HepG2 (cell line): ENCODE measurements at regions of chr12 and their contacts with region 1.

Region 1: DNA sequence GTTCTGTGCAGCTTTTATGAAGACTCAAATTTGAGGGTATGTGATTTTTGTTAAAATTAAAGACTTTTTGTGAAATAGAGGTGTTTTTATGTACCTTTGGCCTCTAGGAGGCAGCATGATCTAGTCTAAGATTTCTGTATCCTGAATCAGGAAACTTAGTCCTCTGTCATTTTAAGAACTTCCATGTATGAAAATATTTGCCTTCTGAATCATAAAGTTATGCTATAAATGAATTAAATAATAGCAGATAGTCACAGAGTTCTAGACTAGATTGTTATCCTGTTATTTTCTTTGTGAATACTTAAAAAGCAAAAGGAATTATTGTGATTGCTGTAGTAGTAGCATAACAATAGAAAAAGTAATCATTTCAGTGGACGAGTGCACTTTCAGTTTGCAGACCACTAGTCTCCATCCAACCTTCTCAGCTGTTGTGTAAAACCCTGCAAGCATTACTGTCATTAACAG is 56.3 kb downstream of the FGD4 start:
- DNase-seq: peak; percentile 55
- ATAC-seq: no peak
- H3K4me3 ChIP-seq: no peak overlapping the region
- H3K27ac ChIP-seq: no peak overlapping the region
- H3K4me1 ChIP-seq: peaks cover 11% of the 10 kb centered on the region
- H3K27me3 ChIP-seq: no peaks in the 10 kb centered on the region
- CTCF ChIP-seq: peak; percentile 73
- EP300 ChIP-seq: no peak
- POLR2A ChIP-seq: no peak
- RAD21 ChIP-seq: peak; percentile 59; the same call in 1 of the 2 replicates

Region 2: DNA sequence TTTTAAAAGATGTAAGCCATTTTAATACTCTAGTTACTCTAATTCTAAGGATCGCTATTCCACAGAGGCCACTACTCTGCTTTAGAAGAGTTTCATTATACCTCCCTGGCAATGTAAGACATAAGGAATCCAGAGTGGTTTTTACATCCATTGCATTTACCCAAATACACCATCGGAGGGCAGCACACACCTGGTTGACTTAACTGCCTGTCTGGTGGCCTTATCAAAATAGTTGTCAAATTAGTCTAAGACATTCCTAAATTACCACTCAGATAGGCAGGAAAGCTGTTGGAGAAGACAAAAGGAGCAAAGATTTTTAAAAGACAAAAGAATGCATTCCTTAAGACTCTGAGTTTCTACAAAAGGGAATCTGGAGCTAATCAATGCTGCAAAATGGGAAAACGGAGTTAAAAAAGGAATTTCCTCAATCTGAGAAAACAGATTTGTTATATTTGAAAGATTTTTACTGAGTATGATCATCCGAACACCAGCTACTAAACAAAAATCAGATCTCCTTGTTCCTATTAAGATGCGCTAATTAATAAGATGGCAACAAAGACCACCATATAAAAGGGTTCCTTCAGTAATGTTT is 90.1 kb before region 1 on chr12:
- CTCF ChIA-PET with region 1: no interaction called
- POLR2A ChIA-PET with region 1: no interaction called
- in situ Hi-C with region 1: no loop called
- intact Hi-C with region 1: loop called (anchors 5 kb)
- DNase-seq: peak; percentile 64
- ATAC-seq: peak; percentile 70
- H3K4me3 ChIP-seq: no peak overlapping the region
- H3K27ac ChIP-seq: no peak overlapping the region
- H3K4me1 ChIP-seq: peaks cover 15% of the 10 kb centered on the region
- H3K27me3 ChIP-seq: no peaks in the 10 kb centered on the region
- CTCF ChIP-seq: peak; percentile 86
- EP300 ChIP-seq: no peak
- POLR2A ChIP-seq: no peak
- RAD21 ChIP-seq: peak; percentile 83

Region 3: GRCh38 chr12:32533971-32534590 is 78.4 kb after region 1 on chr12:
- CTCF ChIA-PET with region 1: no interaction called
- POLR2A ChIA-PET with region 1: no interaction called
- in situ Hi-C with region 1: no loop called
- intact Hi-C with region 1: loop called (anchors 2 kb)
- DNase-seq: peak; percentile 94
- ATAC-seq: peak; percentile 98
- H3K4me3 ChIP-seq: peak overlapping the region; percentile 66 to 79 (median 71)
- H3K27ac ChIP-seq: peak overlapping the region; percentile 64
- H3K4me1 ChIP-seq: peaks cover 61% of the 10 kb centered on the region
- H3K27me3 ChIP-seq: no peaks in the 10 kb centered on the region
- CTCF ChIP-seq: no peak
- EP300 ChIP-seq: peak; percentile 56 to 64; a peak in 3 of 4 replicates
- POLR2A ChIP-seq: peak; percentile 57 to 66
- RAD21 ChIP-seq: no peak

Region 4: GRCh38 chr12:32659908-32660440 is 204.3 kb after region 1 on chr12:
- CTCF ChIA-PET with region 1: interaction called, 8 read pairs
- POLR2A ChIA-PET with region 1: interaction called, 3 read pairs
- in situ Hi-C with region 1: loop called (anchors 5 kb)
- intact Hi-C with region 1: loop called (anchors 1 kb)
- DNase-seq: no peak
- ATAC-seq: peak; percentile 36; the same call in 2 of the 3 replicates
- H3K4me3 ChIP-seq: no peak overlapping the region
- H3K27ac ChIP-seq: no peak overlapping the region
- H3K4me1 ChIP-seq: no peaks in the 10 kb centered on the region
- H3K27me3 ChIP-seq: no peaks in the 10 kb centered on the region
- CTCF ChIP-seq: no peak
- EP300 ChIP-seq: no peak
- POLR2A ChIP-seq: no peak
- RAD21 ChIP-seq: no peak

Region 5: DNA sequence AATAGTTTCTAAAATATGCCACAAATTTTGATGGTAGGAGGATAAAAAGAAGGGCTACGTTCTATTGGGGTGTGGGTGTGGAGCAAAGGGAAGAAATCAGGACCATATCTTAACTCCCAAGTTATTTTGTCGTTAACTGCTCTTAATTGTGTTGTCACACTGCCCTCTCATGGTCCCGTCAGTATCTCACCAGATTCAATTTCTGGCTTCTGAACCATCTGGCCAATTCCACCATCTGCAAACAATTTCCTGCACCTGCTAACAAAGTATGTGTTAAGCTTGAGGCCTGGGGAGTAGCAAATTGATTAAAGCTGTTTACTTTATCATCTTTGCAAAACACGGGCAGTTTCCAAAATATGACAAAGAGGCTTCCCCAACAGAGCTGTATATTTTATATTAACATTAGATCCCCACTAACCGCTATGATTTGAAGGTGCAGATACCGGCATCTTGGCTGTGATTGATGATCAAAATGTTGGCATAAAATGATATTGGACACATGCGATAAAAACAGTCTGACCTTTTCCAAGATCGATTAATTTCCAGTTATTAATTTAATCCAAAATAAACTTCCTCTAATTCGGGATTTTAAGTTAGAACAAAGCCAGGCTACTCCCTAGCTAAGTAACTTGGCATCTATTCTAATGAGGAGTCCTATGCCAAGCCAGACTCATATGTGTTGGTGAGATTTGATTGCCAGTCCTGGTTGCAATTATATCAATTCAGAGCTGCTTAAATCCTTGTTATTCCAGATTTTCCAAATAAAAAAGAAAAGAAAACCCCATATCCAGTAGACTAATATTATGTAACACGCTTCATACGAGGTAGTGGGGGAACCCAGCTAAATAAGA is 216.5 kb after region 1 on chr12:
- CTCF ChIA-PET with region 1: interaction called, 14 read pairs
- POLR2A ChIA-PET with region 1: no interaction called
- in situ Hi-C with region 1: no loop called
- intact Hi-C with region 1: loop called (anchors 1 kb)
- DNase-seq: peak; percentile 51
- ATAC-seq: peak; percentile 76
- H3K4me3 ChIP-seq: no peak overlapping the region
- H3K27ac ChIP-seq: no peak overlapping the region
- H3K4me1 ChIP-seq: peaks cover 33% of the 10 kb centered on the region
- H3K27me3 ChIP-seq: no peaks in the 10 kb centered on the region
- CTCF ChIP-seq: peak; percentile 83
- EP300 ChIP-seq: no peak
- POLR2A ChIP-seq: no peak
- RAD21 ChIP-seq: peak; percentile 74